Activated CD4-positive, alpha-beta memory T cell treated with anti-CD3 and anti-CD28 coated beads, Interleukin-2, amount 10 ng/mL, durations not matched to agents 7 days and 5 days (primary cell): ENCODE measurements at regions of chr14 and their contacts with region 1.

Region 1: DNA sequence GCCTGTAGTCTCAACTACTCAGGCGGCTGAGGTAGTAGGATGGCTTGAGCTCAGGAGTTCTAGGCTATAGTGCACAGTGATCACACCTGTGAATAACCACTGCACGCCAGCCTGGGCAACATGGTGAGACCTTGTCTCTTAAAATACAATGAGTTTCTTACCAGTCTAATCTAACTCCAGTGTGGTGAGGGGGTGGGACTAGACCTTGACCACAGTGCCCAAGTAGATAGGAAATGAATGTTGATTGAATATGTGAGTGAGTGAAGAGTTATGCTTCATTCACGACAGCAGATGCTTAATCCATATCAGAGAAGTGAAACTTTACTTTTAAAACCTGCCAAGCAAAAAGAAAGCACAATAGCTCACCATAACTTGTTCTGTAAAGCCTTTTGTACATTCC is 11.2 kb upstream of the AK7 start:
- DNase-seq: peak; percentile 21
- H3K4me3 Mint-ChIP-seq: no peak overlapping the region
- H3K27ac Mint-ChIP-seq: no peak overlapping the region
- H3K4me1 Mint-ChIP-seq: peaks cover 7% of the 10 kb centered on the region
- H3K27me3 Mint-ChIP-seq: no peaks in the 10 kb centered on the region

Region 2: DNA sequence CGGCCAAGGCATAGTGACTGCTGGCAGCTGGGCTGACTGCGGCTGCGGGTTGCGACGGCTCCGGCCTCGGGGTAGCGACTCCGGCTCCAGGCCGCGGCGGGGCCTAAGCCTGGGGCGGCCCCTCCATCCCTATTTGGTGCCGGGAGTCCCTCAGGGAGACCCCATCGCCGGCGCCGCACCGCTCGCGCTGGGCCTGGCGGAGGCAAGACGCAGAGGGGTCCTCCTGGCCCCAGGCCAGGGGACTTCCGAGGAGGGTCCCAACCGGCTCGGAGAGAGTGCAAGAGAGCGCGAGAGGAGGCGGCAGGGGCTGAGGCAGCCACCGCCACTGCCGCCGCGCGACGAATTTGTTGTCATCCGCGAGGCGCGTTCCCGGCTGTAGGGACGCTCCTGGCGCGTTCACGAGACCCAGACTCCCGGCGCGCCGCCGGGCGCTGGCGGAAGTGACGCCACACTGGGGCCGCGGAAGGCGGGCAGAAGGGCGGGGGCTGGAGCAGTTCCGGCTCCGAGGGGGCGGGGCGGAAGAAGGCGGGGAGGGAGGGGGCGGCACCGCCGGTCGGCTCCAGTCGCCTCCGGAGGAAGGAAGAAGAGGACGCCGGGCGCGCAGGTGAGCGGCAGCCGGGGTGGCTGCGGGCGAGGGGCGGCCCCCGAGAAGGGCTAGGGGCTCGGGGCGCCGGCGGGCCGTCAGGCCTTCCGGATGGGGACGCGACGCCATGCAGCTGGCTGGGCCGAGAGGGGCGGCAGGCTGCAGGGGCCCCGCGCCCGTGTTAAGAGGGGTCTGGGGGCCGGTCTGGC is 17.6 kb before region 1 on chr14 and contains the starts of genes ATG2B and GSKIP:
- CTCF ChIA-PET with region 1: no interaction called
- POLR2A ChIA-PET with region 1: interaction called, 12 read pairs
- DNase-seq: peak; percentile 97
- H3K4me3 Mint-ChIP-seq: peak within 1 kb of the TSS; percentile 80
- H3K27ac Mint-ChIP-seq: peak within 1 kb of the TSS; percentile 81
- H3K4me1 Mint-ChIP-seq: peaks cover 40% of the 10 kb centered on the region
- H3K27me3 Mint-ChIP-seq: no peaks in the 10 kb centered on the region
- total RNA-seq, gene ATG2B: 16.3 to 17.4 TPM
- total RNA-seq, gene GSKIP: 25.4 to 25.9 TPM

Region 3: GRCh38 chr14:96455596-96455995 is 74.9 kb after region 1 on chr14:
- CTCF ChIA-PET with region 1: no interaction called
- POLR2A ChIA-PET with region 1: no interaction called
- DNase-seq: no peak
- H3K4me3 Mint-ChIP-seq: no peak overlapping the region
- H3K27ac Mint-ChIP-seq: no peak overlapping the region
- H3K4me1 Mint-ChIP-seq: no peaks in the 10 kb centered on the region
- H3K27me3 Mint-ChIP-seq: peaks cover 5% of the 10 kb centered on the region

Region 4: GRCh38 chr14:96479435-96480146 is 98.9 kb after region 1 on chr14:
- CTCF ChIA-PET with region 1: no interaction called
- POLR2A ChIA-PET with region 1: no interaction called
- DNase-seq: no peak
- H3K4me3 Mint-ChIP-seq: no peak overlapping the region
- H3K27ac Mint-ChIP-seq: no peak overlapping the region
- H3K4me1 Mint-ChIP-seq: no peaks in the 10 kb centered on the region
- H3K27me3 Mint-ChIP-seq: peaks cover 12% of the 10 kb centered on the region